Common myeloid progenitor, CD34-positive (primary cell): ENCODE measurements at regions of chr22 and their contacts with region 1.

Region 1: GRCh38 chr22:35761037-35761436 is 43.4 kb downstream of the APOL5 start:
- DNase-seq: peak; percentile 52 to 76 (median 72)
- H3K4me3 ChIP-seq: no peak overlapping the region
- H3K27ac ChIP-seq: no peak overlapping the region
- H3K4me1 ChIP-seq: no peaks in the 10 kb centered on the region
- H3K27me3 ChIP-seq: no peaks in the 10 kb centered on the region

Region 2: DNA sequence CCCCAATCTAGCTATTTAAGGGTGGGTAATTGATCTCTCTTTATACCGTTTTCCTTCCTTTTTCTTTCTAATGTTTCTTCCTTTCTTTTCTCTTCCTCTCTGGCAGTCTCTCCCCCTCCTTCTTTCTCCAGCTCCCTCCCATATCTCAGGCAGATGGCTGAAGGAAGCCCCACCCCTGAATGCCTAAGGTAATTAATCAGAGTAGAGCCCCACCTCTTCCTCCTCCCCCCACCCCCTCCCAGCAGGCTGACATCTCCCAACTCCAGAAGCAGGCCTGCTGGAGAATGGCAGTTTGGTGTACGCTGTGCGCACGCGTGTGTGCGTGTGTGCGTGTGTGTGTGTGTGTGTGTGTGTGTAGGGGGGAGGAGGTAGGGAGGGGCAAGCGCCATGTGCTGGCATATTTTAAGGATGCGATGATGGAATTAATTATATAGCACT is 79.3 kb after region 1 on chr22:
- CTCF ChIA-PET with region 1: interaction called, 11 read pairs
- POLR2A ChIA-PET with region 1: no interaction called
- DNase-seq: peak; percentile 90 to 96 (median 94)
- H3K4me3 ChIP-seq: peak overlapping the region in 6 of 7 experiments; percentile 35 to 84 (median 64)
- H3K27ac ChIP-seq: peak overlapping the region in 1 of 2 experiments; percentile 52
- H3K4me1 ChIP-seq: peaks cover 7 to 48% (median 17%) of the 10 kb centered on the region in 4 experiments
- H3K27me3 ChIP-seq: no peaks in the 10 kb centered on the region